ENCODE measurements at regions of chr17 and their contacts with region 1.

Region 1: DNA sequence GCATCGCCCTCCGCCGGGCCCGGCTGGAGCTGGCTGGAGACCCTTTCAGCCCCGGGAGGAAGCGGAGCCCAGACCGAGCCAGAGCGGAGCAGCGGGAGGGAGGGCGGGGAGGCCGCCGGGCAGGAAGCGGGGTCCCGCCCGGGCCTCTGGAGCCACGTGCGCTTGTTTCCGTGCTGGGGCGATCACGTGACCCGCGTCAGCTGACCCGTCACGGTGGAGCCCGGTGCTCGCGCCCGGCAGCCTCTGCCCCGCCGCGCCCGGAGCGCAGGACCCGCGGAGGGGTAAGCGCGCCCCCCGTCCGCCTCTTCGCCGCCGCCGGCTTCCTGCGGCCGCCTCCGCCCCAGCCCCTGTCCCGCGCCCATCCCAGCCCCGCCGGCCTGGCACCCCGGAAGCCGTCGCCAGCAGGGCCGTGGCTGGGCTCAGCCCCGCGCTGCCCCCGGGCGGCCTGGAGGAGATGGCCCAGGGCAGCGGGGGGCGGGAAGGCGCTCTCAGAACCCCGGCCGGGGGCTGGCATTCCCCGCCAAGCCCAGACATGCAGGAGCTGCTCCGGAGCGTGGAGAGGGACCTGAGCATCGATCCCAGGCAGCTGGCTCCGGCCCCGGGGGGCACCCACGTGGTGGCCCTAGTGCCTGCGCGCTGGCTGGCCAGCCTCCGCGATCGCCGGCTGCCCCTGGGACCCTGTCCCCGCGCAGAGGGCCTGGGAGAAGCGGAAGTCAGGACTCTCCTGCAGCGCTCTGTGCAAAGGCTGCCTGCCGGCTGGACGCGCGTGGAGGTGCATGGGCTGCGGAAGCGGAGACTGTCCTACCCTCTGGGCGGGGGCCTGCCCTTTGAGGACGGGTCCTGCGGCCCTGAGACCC is at the start of gene WDR81:
- DNase-seq: peak; percentile 85
- ATAC-seq: peak; percentile 55
- H3K4me3 Mint-ChIP-seq: peak within 1 kb of the TSS; percentile 78
- H3K27ac Mint-ChIP-seq: peak within 1 kb of the TSS; percentile 85
- H3K4me1 Mint-ChIP-seq: peaks cover 63% of the 10 kb centered on the region
- H3K27me3 Mint-ChIP-seq: no peaks in the 10 kb centered on the region
- CTCF ChIP-seq: no peak
- total RNA-seq, gene WDR81: 42.7 and 48.4 TPM in 2 replicates

Region 2: DNA sequence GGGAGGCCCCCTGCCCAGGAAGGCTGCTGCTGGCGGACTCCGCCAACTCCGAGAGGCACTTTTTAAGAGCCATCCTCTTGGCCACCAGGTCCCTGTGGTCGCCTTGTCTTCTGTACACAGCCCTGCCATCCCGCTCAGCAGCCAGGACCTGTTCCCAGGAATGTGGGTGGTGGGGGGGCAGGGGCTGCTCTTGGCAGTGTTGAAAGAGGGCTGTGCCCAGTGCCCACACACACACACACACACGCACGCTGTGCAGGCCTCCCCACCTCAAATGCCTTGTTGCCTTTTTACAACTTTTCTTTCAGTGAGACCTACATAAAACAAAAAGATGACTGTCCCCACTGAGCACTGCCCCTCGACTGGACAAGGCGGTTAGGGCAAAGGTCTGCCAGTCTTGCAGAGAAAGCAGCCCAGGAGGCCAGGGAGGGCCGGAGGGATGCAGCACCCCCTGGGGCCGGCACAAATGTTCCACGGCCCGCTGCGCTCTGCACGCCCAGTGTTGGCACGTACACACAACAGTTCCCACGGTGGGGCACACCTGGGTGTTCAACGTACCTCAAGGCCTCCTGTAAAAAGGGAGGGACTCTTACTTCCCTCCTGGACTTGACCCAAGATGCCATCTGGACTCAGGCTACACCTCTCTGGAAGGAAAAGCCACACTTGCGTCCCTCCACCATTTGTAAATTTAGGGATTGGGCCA is 143.6 kb before region 1 on chr17:
- CTCF ChIA-PET with region 1: no interaction called
- POLR2A ChIA-PET with region 1: no interaction called
- intact Hi-C with region 1: no loop called
- DNase-seq: no peak
- ATAC-seq: no peak
- H3K4me3 Mint-ChIP-seq: no peak overlapping the region
- H3K27ac Mint-ChIP-seq: no peak overlapping the region
- H3K4me1 Mint-ChIP-seq: peaks cover 27% of the 10 kb centered on the region
- H3K27me3 Mint-ChIP-seq: no peaks in the 10 kb centered on the region
- CTCF ChIP-seq: no peak

Region 3: GRCh38 chr17:1684378-1685189 is 40.1 kb before region 1 on chr17 and contains the start of gene PRPF8:
- CTCF ChIA-PET with region 1: interaction called, 4 read pairs
- POLR2A ChIA-PET with region 1: interaction called, 16 read pairs
- intact Hi-C with region 1: no loop called
- DNase-seq: peak; percentile 95
- ATAC-seq: peak; percentile 99
- H3K4me3 Mint-ChIP-seq: peak within 1 kb of the TSS; percentile 100
- H3K27ac Mint-ChIP-seq: peak within 1 kb of the TSS; percentile 96
- H3K4me1 Mint-ChIP-seq: peaks cover 33% of the 10 kb centered on the region
- H3K27me3 Mint-ChIP-seq: no peaks in the 10 kb centered on the region
- CTCF ChIP-seq: no peak
- total RNA-seq, gene PRPF8: 401 and 442 TPM in 2 replicates

Region 4: DNA sequence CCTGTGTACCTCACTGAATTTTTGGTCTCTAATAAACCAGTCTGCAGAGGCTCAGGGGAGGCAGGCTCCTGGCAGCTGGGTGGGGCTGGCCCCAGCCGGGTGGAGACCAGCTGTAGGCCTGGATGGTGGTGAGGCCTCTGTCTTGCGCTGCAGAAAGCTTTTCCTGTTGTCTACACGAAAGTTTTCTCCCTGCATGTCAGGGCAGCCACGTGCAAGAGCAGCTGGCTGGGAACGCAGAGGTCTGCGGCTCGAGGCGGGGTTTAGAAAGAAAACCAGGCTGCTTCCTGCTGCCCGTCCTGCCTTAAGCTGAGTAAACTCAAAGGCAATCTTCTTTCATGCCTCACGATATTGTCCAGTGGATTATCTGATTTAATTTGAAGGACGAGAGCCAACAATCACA is 39.5 kb after region 1 on chr17:
- CTCF ChIA-PET with region 1: interaction called, 6 read pairs
- POLR2A ChIA-PET with region 1: interaction called, 44 read pairs
- intact Hi-C with region 1: no loop called
- DNase-seq: peak; percentile 41
- ATAC-seq: peak; percentile 85
- H3K4me3 Mint-ChIP-seq: peak overlapping the region; percentile 53
- H3K27ac Mint-ChIP-seq: peak overlapping the region; percentile 72
- H3K4me1 Mint-ChIP-seq: peaks cover 46% of the 10 kb centered on the region
- H3K27me3 Mint-ChIP-seq: no peaks in the 10 kb centered on the region
- CTCF ChIP-seq: no peak

Region 5: DNA sequence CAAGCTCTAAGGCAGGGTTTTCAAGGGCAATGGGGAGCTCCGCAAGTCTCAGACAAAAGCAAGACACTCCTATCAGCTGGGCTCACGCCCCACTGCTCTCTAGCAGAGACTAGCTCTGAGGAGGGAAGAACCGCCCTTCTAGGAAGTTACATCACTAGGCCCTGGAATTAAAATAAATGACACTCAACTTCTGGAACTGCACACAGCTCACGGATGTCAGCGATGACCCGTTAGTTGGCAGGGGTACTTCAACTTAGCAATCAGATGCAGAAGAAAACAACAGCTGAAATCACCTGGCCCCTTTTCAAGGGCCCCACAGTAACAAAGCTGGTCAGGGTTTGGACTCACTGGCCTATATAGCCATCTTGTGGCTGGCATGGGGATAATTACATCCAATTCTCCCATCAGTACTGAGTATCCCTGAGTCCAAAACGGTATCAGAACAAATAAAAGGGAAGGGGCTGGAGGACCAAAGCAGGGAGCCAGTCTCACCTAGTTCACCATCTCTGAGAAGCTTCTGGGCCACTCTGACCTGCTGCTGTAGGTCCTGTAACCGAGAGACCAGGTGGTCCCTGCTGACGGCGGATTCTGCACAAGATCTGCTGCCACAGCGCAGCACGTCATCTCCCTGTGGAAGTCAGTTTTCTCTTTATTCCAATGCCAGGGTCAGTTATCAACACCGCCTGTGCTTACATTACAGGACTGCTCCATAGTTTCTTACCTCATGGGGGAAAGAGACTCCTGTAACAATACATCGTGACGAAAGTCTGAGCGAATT is 59.3 kb after region 1 on chr17:
- CTCF ChIA-PET with region 1: interaction called, 175 read pairs
- POLR2A ChIA-PET with region 1: interaction called, 113 read pairs
- intact Hi-C with region 1: loop called (anchors 1 kb)
- DNase-seq: no peak
- ATAC-seq: peak; percentile 90
- H3K4me3 Mint-ChIP-seq: peak overlapping the region; percentile 44
- H3K27ac Mint-ChIP-seq: peak overlapping the region; percentile 84
- H3K4me1 Mint-ChIP-seq: peaks cover 33% of the 10 kb centered on the region
- H3K27me3 Mint-ChIP-seq: no peaks in the 10 kb centered on the region
- CTCF ChIP-seq: no peak

Region 6: GRCh38 chr17:1865252-1866037 is 140.7 kb after region 1 on chr17:
- CTCF ChIA-PET with region 1: interaction called, 45 read pairs
- POLR2A ChIA-PET with region 1: interaction called, 3 read pairs
- intact Hi-C with region 1: loop called (anchors 1 kb)
- DNase-seq: no peak
- ATAC-seq: peak; percentile 42
- H3K4me3 Mint-ChIP-seq: no peak overlapping the region
- H3K27ac Mint-ChIP-seq: no peak overlapping the region
- H3K4me1 Mint-ChIP-seq: no peaks in the 10 kb centered on the region
- H3K27me3 Mint-ChIP-seq: no peaks in the 10 kb centered on the region
- CTCF ChIP-seq: peak; percentile 63

Region 7: DNA sequence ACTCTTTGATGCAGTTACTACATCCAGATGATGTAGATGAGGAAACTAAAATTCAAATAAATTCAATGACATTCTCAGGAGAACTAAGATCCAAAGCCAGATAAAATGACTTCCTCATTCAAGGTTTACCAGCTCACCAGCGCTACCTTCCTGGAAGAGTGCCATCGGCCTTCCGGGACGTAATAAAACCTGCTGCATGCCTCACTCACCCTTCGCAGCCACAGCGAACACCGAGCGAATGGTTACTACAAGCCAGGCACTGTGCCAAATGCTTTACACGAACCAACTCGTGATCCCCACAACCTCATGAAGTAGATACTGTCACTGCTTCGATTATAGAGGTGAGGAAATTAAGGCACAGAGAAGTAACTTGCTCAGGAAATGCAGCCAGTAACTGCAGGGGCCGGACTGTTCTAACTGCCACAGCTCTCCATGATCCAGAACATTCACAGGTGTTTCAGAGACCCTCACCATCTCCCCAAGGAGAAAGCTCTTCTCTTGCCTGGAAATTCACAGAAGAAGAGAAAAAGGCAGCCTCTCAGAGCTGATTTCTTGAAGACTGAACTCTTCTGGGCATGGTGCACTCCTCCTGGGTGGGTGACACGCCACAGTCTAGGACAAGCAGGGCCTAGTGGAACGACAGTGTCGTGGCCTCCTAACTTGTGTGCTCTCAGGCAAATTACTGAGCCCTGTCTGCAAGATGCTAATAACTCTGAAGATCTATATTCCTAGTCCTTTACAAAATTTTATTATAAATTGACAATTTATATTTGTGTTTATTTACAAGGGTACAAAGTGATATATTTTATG is 376.9 kb after region 1 on chr17:
- CTCF ChIA-PET with region 1: no interaction called
- POLR2A ChIA-PET with region 1: no interaction called
- intact Hi-C with region 1: no loop called
- DNase-seq: no peak
- ATAC-seq: peak; percentile 69
- H3K4me3 Mint-ChIP-seq: no peak overlapping the region
- H3K27ac Mint-ChIP-seq: peak overlapping the region; percentile 14
- H3K4me1 Mint-ChIP-seq: peaks cover 12% of the 10 kb centered on the region
- H3K27me3 Mint-ChIP-seq: no peaks in the 10 kb centered on the region
- CTCF ChIP-seq: no peak

Measured in activated B cell treated with CpG ODN at 0.5 μM for 24 hours (primary cell).